AG04449 (cell line): ENCODE measurements at regions of chr5 and their contacts with region 1.

Region 1: DNA sequence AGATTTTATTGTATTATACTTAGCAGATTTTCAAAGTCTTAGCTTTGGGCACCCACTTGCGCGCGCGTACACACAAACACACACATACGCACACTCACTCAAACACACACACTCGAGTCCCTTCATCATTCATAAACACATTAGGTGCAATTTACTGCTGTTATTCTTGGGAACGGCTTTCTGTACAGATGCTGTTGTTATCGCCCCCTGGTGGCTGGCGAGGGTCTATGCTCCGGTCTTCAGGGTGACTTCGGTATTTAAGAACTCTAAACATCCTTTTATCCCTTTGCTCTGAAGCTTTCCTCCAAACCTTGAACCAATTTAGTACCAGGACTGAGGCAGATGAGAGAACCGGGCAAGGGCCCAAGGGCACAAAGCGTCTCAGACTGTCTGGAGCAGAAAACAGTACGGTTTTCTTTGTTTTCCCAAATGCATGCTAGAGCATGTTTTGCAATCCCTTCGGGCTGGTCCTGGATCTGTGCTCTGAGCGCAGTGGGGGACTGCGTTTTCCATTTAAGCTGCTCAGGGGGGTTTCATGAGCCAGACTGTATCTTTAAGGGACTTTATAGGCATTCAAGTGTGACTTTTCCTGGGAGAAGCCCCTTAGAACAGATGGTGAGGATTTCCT is 1.7 kb upstream of the SLIT3 start:
- DNase-seq: peak; percentile 31
- H3K4me3 ChIP-seq: no peak overlapping the region; the same call in 1 of the 2 replicates
- CTCF ChIP-seq: peak; percentile 80

Region 2: GRCh38 chr5:168706655-168707069 is 595.9 kb before region 1 on chr5:
- CTCF ChIA-PET with region 1: interaction called, 14 read pairs
- POLR2A ChIA-PET with region 1: no interaction called
- DNase-seq: no peak
- H3K4me3 ChIP-seq: no peak overlapping the region
- CTCF ChIP-seq: peak; percentile 79

Region 3: GRCh38 chr5:168978015-168978414 is 324.6 kb before region 1 on chr5:
- CTCF ChIA-PET with region 1: interaction called, 22 read pairs
- POLR2A ChIA-PET with region 1: no interaction called
- DNase-seq: peak; percentile 21
- H3K4me3 ChIP-seq: no peak overlapping the region
- CTCF ChIP-seq: no peak

Region 4: GRCh38 chr5:169289520-169289919 is 13.1 kb before region 1 on chr5:
- CTCF ChIA-PET with region 1: interaction called, 27 read pairs
- POLR2A ChIA-PET with region 1: no interaction called
- DNase-seq: no peak
- H3K4me3 ChIP-seq: no peak overlapping the region
- CTCF ChIP-seq: no peak

Region 5: GRCh38 chr5:169318556-169318955 is 16.0 kb after region 1 on chr5:
- CTCF ChIA-PET with region 1: interaction called, 11 read pairs
- POLR2A ChIA-PET with region 1: no interaction called
- DNase-seq: no peak
- H3K4me3 ChIP-seq: no peak overlapping the region
- CTCF ChIP-seq: no peak

Region 6: GRCh38 chr5:169347786-169348185 is 45.2 kb after region 1 on chr5:
- CTCF ChIA-PET with region 1: interaction called, 12 read pairs
- POLR2A ChIA-PET with region 1: interaction called, 4 read pairs
- DNase-seq: no peak
- H3K4me3 ChIP-seq: no peak overlapping the region
- CTCF ChIP-seq: no peak

Region 7: GRCh38 chr5:169474226-169474625 is 171.6 kb after region 1 on chr5:
- CTCF ChIA-PET with region 1: no interaction called
- POLR2A ChIA-PET with region 1: no interaction called
- DNase-seq: no peak
- H3K4me3 ChIP-seq: no peak overlapping the region
- CTCF ChIP-seq: no peak